Calu3 (cell line): ENCODE measurements at regions of chr10 and their contacts with region 1.

Region 1: GRCh38 chr10:49327036-49327813 is 28.3 kb downstream of the C10orf71 start:
- DNase-seq: no peak
- H3K4me3 Mint-ChIP-seq: no peak overlapping the region
- H3K27ac Mint-ChIP-seq: no peak overlapping the region
- H3K4me1 Mint-ChIP-seq: no peaks in the 10 kb centered on the region
- H3K27me3 Mint-ChIP-seq: peaks cover 90% of the 10 kb centered on the region
- CTCF ChIP-seq: no peak

Region 2: DNA sequence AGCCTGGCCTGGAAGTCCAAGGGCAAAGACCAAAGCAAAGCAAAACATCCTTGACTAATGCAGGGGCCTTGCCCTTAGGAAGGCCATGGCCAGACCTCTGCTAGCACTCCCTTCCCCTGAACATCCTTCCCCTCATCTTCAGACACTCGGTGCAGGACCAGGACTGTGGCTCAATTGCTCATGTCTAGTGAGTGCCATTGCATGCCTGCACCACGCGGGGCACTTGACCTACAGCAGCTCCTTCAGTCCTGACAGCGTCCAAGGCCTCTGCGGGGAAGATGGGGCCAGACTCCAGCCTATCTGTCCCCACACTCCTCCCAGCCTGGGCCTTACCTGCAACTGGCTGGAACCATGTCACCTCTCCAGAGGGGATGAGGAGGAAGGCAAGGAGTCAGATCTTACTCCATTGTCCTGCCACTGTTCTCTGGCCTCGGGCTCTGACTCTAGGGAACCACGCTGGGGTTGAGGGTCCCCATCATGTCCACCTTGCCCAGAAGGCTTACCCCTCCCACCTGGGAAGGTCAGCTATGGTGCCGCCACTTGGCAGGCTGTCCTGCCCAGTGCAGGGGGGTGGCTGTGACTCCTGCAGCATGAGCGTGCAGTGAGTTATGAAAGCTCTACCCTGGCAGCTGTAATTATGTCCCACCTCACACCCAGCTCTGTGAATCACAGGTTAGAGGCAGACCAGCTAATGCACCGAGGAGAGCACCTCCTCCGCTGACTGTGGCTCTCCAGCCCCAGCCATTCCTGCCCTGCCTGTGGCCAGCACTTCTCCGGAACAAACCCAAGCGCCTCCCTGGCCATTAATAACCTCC is 52.6 kb after region 1 on chr10:
- CTCF ChIA-PET with region 1: no interaction called
- intact Hi-C with region 1: no loop called
- DNase-seq: peak; percentile 22
- H3K4me3 Mint-ChIP-seq: no peak overlapping the region
- H3K27ac Mint-ChIP-seq: no peak overlapping the region
- H3K4me1 Mint-ChIP-seq: no peaks in the 10 kb centered on the region
- H3K27me3 Mint-ChIP-seq: peaks cover 84% of the 10 kb centered on the region
- CTCF ChIP-seq: peak; percentile 29

Region 3: DNA sequence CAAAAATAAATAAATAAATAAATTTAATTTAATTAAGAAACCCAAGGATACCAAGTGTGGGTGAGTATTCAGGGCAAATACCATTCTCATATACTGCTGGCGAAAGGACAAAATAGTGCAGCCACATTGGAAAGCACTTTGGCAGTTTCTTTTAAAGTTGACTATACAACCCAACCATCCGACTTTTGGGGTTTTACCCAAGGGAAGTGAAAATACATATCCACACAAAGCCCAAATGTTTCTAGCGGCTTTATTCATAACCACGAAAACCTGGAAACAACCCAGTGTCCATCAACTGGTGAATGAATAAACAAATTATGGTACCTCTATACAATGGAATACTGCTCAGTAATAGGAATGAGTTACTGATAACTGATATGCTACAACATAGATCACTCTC is 471.1 kb after region 1 on chr10:
- CTCF ChIA-PET with region 1: no interaction called
- intact Hi-C with region 1: no loop called
- DNase-seq: no peak
- H3K4me3 Mint-ChIP-seq: no peak overlapping the region
- H3K27ac Mint-ChIP-seq: no peak overlapping the region
- H3K4me1 Mint-ChIP-seq: no peaks in the 10 kb centered on the region
- H3K27me3 Mint-ChIP-seq: no peaks in the 10 kb centered on the region
- CTCF ChIP-seq: no peak

Region 4: DNA sequence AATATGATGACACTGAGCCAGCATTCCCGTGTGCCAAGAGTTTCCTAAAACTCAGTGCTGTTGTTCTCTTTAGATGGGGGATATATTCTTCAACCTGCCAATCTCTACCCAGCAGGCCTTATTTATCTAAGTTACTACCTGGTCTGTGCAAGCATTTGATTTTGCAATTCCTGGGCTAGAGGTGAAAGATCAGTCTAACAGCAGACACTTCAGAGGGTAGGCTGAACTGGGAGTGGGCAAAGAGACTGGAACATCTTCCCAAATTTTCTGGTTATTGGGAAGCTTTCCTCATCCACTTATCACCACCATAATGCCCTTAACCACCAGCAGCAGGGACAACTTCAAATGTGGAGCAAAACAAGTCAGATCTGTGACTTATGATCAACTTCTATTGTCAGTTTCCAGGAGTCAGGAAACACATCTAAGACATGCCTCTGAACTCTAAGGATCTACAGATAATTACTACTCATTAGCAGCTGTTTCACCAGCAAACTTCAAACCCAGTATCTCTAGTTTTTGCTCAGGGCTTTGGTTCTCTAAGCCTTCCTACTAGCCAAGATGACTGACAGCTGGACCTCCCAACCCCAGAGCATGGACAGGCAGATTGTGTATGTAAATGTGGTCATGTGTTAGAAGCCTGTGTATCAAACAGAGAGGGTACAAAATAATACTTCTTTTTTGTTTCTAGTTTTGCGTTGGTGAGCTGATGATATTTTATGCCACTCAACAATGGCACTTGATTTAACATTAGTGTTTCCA is 923.0 kb after region 1 on chr10:
- CTCF ChIA-PET with region 1: interaction called, 12 read pairs
- intact Hi-C with region 1: no loop called
- DNase-seq: no peak
- H3K4me3 Mint-ChIP-seq: no peak overlapping the region
- H3K27ac Mint-ChIP-seq: no peak overlapping the region
- H3K4me1 Mint-ChIP-seq: no peaks in the 10 kb centered on the region
- H3K27me3 Mint-ChIP-seq: peaks cover 68% of the 10 kb centered on the region
- CTCF ChIP-seq: no peak